ENCODE measurements at regions of chr11 and their contacts with region 1.

Region 1: GRCh38 chr11:84455691-84456090 is 1169.5 kb upstream of the CCDC90B start:
- DNase-seq: no peak
- ATAC-seq: no peak
- H3K4me3 ChIP-seq: no peak overlapping the region
- H3K27ac ChIP-seq: no peak overlapping the region
- H3K4me1 ChIP-seq: no peaks in the 10 kb centered on the region
- H3K27me3 ChIP-seq: no peaks in the 10 kb centered on the region; a peak in 1 of 5 replicates
- CTCF ChIP-seq: no peak
- EP300 ChIP-seq: no peak
- POLR2A ChIP-seq: no peak
- RAD21 ChIP-seq: no peak

Region 2: DNA sequence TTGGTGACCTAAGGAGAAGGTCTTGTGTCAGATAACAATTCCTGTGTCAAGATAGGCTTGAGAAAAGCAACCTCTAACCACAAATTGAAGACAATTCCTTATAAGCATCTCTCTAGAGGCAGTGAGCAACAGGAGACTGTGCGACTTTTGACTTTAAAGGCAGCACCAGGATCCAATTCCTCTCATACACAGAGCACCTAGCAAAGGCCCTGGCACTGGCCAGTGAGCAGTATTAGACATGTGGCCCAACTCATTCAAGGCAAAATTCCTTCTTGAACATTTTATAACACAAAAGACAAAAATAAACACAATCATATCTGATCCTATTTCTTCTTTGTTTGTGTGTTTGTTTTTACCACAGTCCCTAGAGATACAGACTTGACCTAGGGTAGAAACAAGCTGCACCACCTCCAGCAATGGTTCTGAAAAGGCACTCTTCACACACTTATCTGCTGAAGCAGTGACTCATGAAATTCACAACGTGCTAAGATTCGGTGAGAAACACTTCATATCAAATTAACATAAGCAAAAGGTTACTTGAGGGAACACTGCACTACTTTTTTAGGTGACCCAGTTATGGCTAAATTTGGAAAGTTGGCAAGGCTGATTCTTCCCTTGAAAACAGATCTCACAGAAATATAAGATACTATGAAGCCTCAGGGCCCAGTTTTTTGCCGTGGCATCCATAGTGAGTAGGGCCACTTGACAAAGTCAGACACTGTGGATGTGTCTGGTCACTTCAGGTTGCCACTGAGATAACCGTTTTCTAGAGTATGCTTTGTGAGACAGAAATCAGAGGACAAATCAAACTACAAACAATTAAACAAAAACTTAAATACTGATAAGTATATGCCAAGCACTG is 152.5 kb after region 1 on chr11:
- CTCF ChIA-PET with region 1: no interaction called
- POLR2A ChIA-PET with region 1: no interaction called
- in situ Hi-C with region 1: no loop called
- intact Hi-C with region 1: loop called (anchors 10 kb)
- DNase-seq: no peak
- ATAC-seq: no peak
- H3K4me3 ChIP-seq: no peak overlapping the region
- H3K27ac ChIP-seq: no peak overlapping the region
- H3K4me1 ChIP-seq: no peaks in the 10 kb centered on the region
- H3K27me3 ChIP-seq: no peaks in the 10 kb centered on the region
- CTCF ChIP-seq: no peak
- EP300 ChIP-seq: no peak
- POLR2A ChIP-seq: no peak
- RAD21 ChIP-seq: no peak

Measured in HepG2 (cell line).